ENCODE measurements at regions of chr19 and their contacts with region 1.

Region 1: GRCh38 chr19:30471441-30471840 is 99.3 kb downstream of the ZNF536 start:
- DNase-seq: no peak
- H3K4me3 ChIP-seq: no peak overlapping the region
- H3K27ac ChIP-seq: no peak overlapping the region
- H3K4me1 ChIP-seq: no peaks in the 10 kb centered on the region
- CTCF ChIP-seq: no peak

Region 2: GRCh38 chr19:30455884-30456283 is 15.6 kb before region 1 on chr19:
- CTCF ChIA-PET with region 1: no interaction called
- POLR2A ChIA-PET with region 1: interaction called, 11 read pairs
- intact Hi-C with region 1: no loop called
- DNase-seq: no peak
- H3K4me3 ChIP-seq: no peak overlapping the region
- H3K27ac ChIP-seq: no peak overlapping the region
- H3K4me1 ChIP-seq: no peaks in the 10 kb centered on the region
- CTCF ChIP-seq: no peak

Measured in OCI-LY7 (cell line).